Activated CD4-positive, alpha-beta memory T cell treated with anti-CD3 and anti-CD28 coated beads for 36 hours (primary cell): ENCODE measurements at regions of chr12 and their contacts with region 1.

Region 1: GRCh38 chr12:64610149-64610678 is at the start of gene RASSF3:
- DNase-seq: peak; percentile 83
- H3K4me3 Mint-ChIP-seq: peak within 1 kb of the TSS; percentile 95
- H3K27ac Mint-ChIP-seq: peak within 1 kb of the TSS; percentile 98
- H3K4me1 Mint-ChIP-seq: peaks cover 37% of the 10 kb centered on the region
- H3K27me3 Mint-ChIP-seq: no peaks in the 10 kb centered on the region
- total RNA-seq, gene RASSF3: 40.6 to 40.7 TPM

Region 2: DNA sequence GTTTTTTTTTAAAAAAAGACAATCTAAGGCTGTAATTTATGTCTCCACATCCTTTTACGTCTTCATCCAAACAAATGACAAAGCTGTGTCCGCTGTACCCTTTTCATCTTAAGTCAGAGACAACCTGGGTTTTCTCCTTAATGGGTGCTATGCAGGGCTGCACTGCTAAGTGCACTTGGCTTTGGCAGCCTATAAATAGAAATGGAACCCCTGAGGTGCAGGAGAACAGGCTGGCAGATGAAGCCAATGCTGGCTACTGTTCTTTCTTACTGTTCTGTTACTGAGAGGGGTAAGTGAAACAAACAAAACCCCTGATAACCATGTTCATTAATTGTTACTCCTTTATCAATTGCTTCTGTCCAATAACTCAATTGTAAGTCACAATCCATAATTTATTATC is 341.0 kb before region 1 on chr12:
- CTCF ChIA-PET with region 1: no interaction called
- POLR2A ChIA-PET with region 1: no interaction called
- intact Hi-C with region 1: no loop called
- DNase-seq: no peak
- H3K4me3 Mint-ChIP-seq: no peak overlapping the region
- H3K27ac Mint-ChIP-seq: no peak overlapping the region
- H3K4me1 Mint-ChIP-seq: no peaks in the 10 kb centered on the region
- H3K27me3 Mint-ChIP-seq: no peaks in the 10 kb centered on the region

Region 3: GRCh38 chr12:64451687-64452558 is 158.3 kb before region 1 on chr12 and contains the start of gene TBK1:
- CTCF ChIA-PET with region 1: no interaction called
- POLR2A ChIA-PET with region 1: no interaction called
- intact Hi-C with region 1: loop called (anchors 2 kb)
- DNase-seq: peak; percentile 77
- H3K4me3 Mint-ChIP-seq: peak within 1 kb of the TSS; percentile 96
- H3K27ac Mint-ChIP-seq: peak within 1 kb of the TSS; percentile 95
- H3K4me1 Mint-ChIP-seq: peaks cover 42% of the 10 kb centered on the region
- H3K27me3 Mint-ChIP-seq: no peaks in the 10 kb centered on the region
- total RNA-seq, gene TBK1: 21.7 to 23.4 TPM

Region 4: DNA sequence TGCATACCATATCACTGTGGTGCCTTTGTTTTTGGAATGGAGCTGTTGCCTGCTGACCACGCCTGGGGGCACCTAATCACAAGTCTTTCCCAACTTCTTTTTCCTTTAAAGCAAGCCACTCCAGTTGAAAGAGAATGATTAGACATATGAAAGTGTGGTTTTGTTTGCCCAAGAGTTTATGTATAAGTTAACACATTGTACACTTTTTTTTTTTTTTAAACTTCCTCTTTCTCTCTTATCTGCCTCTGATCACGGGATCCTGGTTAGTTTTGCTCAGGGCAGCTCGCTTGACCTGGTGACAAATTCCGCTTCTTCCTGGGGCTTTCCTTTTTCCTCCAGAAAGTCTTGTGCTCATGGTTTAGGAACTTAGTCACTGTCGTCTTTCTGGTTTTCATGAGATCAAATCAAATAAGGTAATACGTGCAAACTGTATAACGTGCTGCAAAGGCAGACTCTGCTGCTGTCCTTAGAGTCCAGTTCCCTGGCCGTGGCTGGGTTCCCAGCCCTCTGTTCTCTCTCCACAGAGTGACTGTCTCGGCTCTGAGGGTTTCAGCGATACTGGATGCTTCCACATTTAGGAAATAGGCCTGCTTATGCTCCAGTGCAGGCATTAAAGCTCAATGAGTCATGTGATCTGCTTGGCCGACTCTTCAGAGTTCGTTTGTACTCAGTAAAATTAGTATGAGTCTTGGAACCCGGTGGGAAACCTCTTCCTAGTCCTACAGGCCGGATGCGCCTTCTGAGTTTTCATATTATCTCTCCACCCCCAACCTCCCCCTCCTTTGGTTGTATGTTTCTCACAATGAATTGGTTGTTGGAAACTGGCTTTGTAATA is 15.2 kb after region 1 on chr12:
- CTCF ChIA-PET with region 1: interaction called, 7 read pairs
- POLR2A ChIA-PET with region 1: interaction called, 4 read pairs
- intact Hi-C with region 1: loop called (anchors 1 kb)
- DNase-seq: peak; percentile 58
- H3K4me3 Mint-ChIP-seq: peak overlapping the region; percentile 65
- H3K27ac Mint-ChIP-seq: peak overlapping the region; percentile 88
- H3K4me1 Mint-ChIP-seq: peaks cover 66% of the 10 kb centered on the region
- H3K27me3 Mint-ChIP-seq: no peaks in the 10 kb centered on the region

Region 5: GRCh38 chr12:64679487-64679983 is 69.3 kb after region 1 on chr12:
- CTCF ChIA-PET with region 1: interaction called, 18 read pairs
- POLR2A ChIA-PET with region 1: interaction called, 11 read pairs
- intact Hi-C with region 1: loop called (anchors 1 kb)
- DNase-seq: peak; percentile 78
- H3K4me3 Mint-ChIP-seq: peak overlapping the region; percentile 62
- H3K27ac Mint-ChIP-seq: peak overlapping the region; percentile 91
- H3K4me1 Mint-ChIP-seq: peaks cover 91% of the 10 kb centered on the region
- H3K27me3 Mint-ChIP-seq: no peaks in the 10 kb centered on the region

Region 6: GRCh38 chr12:64696080-64696741 is 86.0 kb after region 1 on chr12:
- CTCF ChIA-PET with region 1: interaction called, 87 read pairs
- POLR2A ChIA-PET with region 1: interaction called, 5 read pairs
- intact Hi-C with region 1: loop called (anchors 1 kb)
- DNase-seq: no peak
- H3K4me3 Mint-ChIP-seq: no peak overlapping the region
- H3K27ac Mint-ChIP-seq: peak overlapping the region; percentile 30
- H3K4me1 Mint-ChIP-seq: peaks cover 63% of the 10 kb centered on the region
- H3K27me3 Mint-ChIP-seq: no peaks in the 10 kb centered on the region